ENCODE measurements at regions of chr22 and their contacts with region 1.

Region 1: GRCh38 chr22:28882878-28883656 is at the start of gene ZNRF3:
- DNase-seq: peak; percentile 76 to 91 (median 87)
- ATAC-seq: peak; percentile 98
- H3K4me3 ChIP-seq: peak within 1 kb of the TSS; percentile 90
- H3K4me3 Mint-ChIP-seq: peak within 1 kb of the TSS; percentile 66 to 94 (median 88)
- H3K27ac ChIP-seq: peak within 1 kb of the TSS; percentile 15
- H3K27ac Mint-ChIP-seq: peak within 1 kb of the TSS; percentile 33 to 78 (median 62)
- H3K4me1 ChIP-seq: peaks cover 8 to 12% of the 10 kb centered on the region in 2 donors
- H3K4me1 Mint-ChIP-seq: peaks cover 13 to 29% (median 21%) of the 10 kb centered on the region in 7 donors
- H3K27me3 ChIP-seq: peaks cover 0 to 3% of the 10 kb centered on the region in 2 donors
- H3K27me3 Mint-ChIP-seq: peaks cover 8 to 72% (median 16%) of the 10 kb centered on the region in 5 donors
- total RNA-seq, gene ZNRF3: 0.59 to 0.98 (median 0.70) TPM

Region 2: GRCh38 chr22:28674121-28674563 is 208.9 kb before region 1 on chr22:
- CTCF ChIA-PET with region 1: no interaction called
- POLR2A ChIA-PET with region 1: no interaction called
- intact Hi-C with region 1: loop called in 1 of 2 experiments (anchors 1 kb)
- DNase-seq: peak in 7 of 9 donors; percentile 57 to 75 (median 61)
- ATAC-seq: peak; percentile 91
- H3K4me3 ChIP-seq: no peak overlapping the region
- H3K4me3 Mint-ChIP-seq: peak overlapping the region in 9 of 10 donors; percentile 70 to 95 (median 78)
- H3K27ac ChIP-seq: no peak overlapping the region
- H3K27ac Mint-ChIP-seq: peak overlapping the region; percentile 88 to 100 (median 98)
- H3K4me1 ChIP-seq: peaks cover 16 to 17% of the 10 kb centered on the region in 2 donors
- H3K4me1 Mint-ChIP-seq: peaks cover 23 to 35% (median 34%) of the 10 kb centered on the region in 7 donors
- H3K27me3 ChIP-seq: peaks cover 10 to 42% of the 10 kb centered on the region in 2 donors
- H3K27me3 Mint-ChIP-seq: peaks cover 47 to 83% (median 66%) of the 10 kb centered on the region in 5 donors

Region 3: GRCh38 chr22:28772633-28773460 is 110.2 kb before region 1 on chr22 and contains the start of gene CCDC117:
- CTCF ChIA-PET with region 1: no interaction called
- POLR2A ChIA-PET with region 1: no interaction called
- intact Hi-C with region 1: loop called in 1 of 2 experiments (anchors 1 kb)
- DNase-seq: peak; percentile 76 to 93 (median 88)
- ATAC-seq: peak; percentile 97
- H3K4me3 ChIP-seq: peak within 1 kb of the TSS; percentile 83
- H3K4me3 Mint-ChIP-seq: peak within 1 kb of the TSS; percentile 84 to 100 (median 97)
- H3K27ac ChIP-seq: peak within 1 kb of the TSS; percentile 91
- H3K27ac Mint-ChIP-seq: peak within 1 kb of the TSS; percentile 86 to 98 (median 91)
- H3K4me1 ChIP-seq: peaks cover 13 to 17% of the 10 kb centered on the region in 2 donors
- H3K4me1 Mint-ChIP-seq: peaks cover 17 to 46% (median 31%) of the 10 kb centered on the region in 7 donors
- H3K27me3 ChIP-seq: no peaks in the 10 kb centered on the region
- H3K27me3 Mint-ChIP-seq: peaks cover 0 to 2% (median 0%) of the 10 kb centered on the region in 5 donors
- total RNA-seq, gene CCDC117: 13.5 to 33.5 (median 21.2) TPM

Region 4: DNA sequence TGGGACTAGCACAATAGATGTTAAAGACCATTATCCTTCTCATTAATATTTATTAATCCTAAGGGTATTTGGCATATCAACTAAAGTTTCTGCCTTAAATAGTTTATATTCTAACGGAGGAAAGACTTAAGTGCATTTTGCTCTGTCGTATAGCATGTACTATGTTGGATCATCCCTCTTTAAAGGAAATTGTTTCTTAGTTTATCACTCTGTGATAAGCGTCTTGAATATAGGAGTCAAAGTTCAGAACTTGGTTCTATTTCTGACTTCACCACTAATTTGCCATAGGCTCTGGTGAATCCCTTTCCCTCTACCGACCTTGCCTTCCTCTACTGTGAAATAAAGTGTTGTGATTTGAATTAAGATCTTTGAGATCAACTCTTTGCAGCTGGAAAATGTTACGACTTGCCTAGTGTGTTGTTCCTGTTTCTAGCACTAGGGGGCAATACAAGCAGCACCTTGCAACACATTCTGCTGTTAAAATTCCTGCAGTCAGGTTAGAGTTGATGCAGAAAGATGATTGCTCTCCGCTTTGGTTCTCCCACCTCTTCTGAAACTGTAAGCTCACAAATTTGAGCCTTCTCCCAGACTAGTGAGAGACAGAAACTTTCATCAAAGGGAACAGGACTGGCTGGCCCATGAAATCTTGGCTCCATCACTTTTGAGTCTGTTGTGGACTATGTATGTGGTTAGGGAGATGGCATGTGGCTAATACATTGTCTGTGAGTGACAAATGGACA is 27.5 kb before region 1 on chr22:
- CTCF ChIA-PET with region 1: no interaction called
- POLR2A ChIA-PET with region 1: no interaction called
- intact Hi-C with region 1: no loop called
- DNase-seq: peak in 8 of 9 donors; percentile 29 to 70 (median 58)
- ATAC-seq: peak; percentile 68
- H3K4me3 ChIP-seq: no peak overlapping the region
- H3K4me3 Mint-ChIP-seq: no peak overlapping the region
- H3K27ac ChIP-seq: no peak overlapping the region
- H3K27ac Mint-ChIP-seq: no peak overlapping the region
- H3K4me1 ChIP-seq: no peaks in the 10 kb centered on the region
- H3K4me1 Mint-ChIP-seq: no peaks in the 10 kb centered on the region
- H3K27me3 ChIP-seq: no peaks in the 10 kb centered on the region
- H3K27me3 Mint-ChIP-seq: peaks cover 3 to 18% (median 5%) of the 10 kb centered on the region in 5 donors

Region 5: GRCh38 chr22:28899199-28899853 is 16.3 kb after region 1 on chr22:
- CTCF ChIA-PET with region 1: no interaction called
- POLR2A ChIA-PET with region 1: interaction called, 5 read pairs
- intact Hi-C with region 1: loop called in 1 of 2 experiments (anchors 2 kb)
- DNase-seq: peak in 7 of 9 donors; percentile 19 to 67 (median 58)
- ATAC-seq: peak; percentile 89
- H3K4me3 ChIP-seq: no peak overlapping the region
- H3K4me3 Mint-ChIP-seq: peak overlapping the region in 8 of 10 donors; percentile 0 to 71 (median 48)
- H3K27ac ChIP-seq: no peak overlapping the region
- H3K27ac Mint-ChIP-seq: peak overlapping the region in 4 of 9 donors; percentile 2 to 86 (median 54)
- H3K4me1 ChIP-seq: peaks cover 6 to 7% of the 10 kb centered on the region in 2 donors
- H3K4me1 Mint-ChIP-seq: peaks cover 11 to 33% (median 22%) of the 10 kb centered on the region in 7 donors
- H3K27me3 ChIP-seq: no peaks in the 10 kb centered on the region
- H3K27me3 Mint-ChIP-seq: peaks cover 0 to 61% (median 5%) of the 10 kb centered on the region in 5 donors

Region 6: DNA sequence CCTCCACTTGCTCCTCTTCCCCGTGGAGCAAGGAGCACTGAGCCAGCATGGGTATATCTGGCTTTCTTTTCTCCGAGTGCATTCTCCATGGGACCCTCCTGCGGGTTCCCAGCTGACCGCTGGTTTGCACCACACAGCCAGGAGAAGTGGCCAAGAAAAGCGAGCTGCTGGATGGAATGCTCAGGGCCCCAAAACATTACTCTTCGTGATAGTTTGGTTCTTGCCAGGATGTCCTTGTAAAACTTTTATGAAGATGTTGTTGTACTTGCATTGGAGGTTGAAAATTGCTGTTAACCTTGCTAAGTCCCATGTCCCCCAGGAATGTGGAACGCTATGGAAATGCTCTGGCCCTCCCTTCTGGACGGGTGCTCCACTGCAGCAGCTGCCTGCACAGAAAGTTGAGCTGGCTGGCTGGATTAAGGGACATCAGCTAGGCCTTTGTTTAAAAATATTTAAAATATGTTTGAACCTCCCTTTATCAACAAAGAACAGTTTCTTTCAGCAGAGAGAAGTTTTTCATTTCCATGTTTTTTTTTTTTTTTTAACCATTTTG is 69.0 kb after region 1 on chr22:
- CTCF ChIA-PET with region 1: no interaction called
- POLR2A ChIA-PET with region 1: no interaction called
- intact Hi-C with region 1: loop called (anchors 2 to 10 kb)
- DNase-seq: no peak
- ATAC-seq: no peak
- H3K4me3 ChIP-seq: no peak overlapping the region
- H3K4me3 Mint-ChIP-seq: no peak overlapping the region
- H3K27ac ChIP-seq: no peak overlapping the region
- H3K27ac Mint-ChIP-seq: no peak overlapping the region
- H3K4me1 ChIP-seq: peaks cover 15 to 20% of the 10 kb centered on the region in 2 donors
- H3K4me1 Mint-ChIP-seq: peaks cover 12 to 19% (median 19%) of the 10 kb centered on the region in 7 donors
- H3K27me3 ChIP-seq: peaks cover 0 to 42% of the 10 kb centered on the region in 2 donors
- H3K27me3 Mint-ChIP-seq: peaks cover 71 to 91% (median 82%) of the 10 kb centered on the region in 5 donors

Region 7: GRCh38 chr22:29072193-29072978 is 189.3 kb after region 1 on chr22:
- CTCF ChIA-PET with region 1: no interaction called
- POLR2A ChIA-PET with region 1: no interaction called
- intact Hi-C with region 1: loop called (anchors 1 kb)
- DNase-seq: peak; percentile 72 to 87 (median 84)
- ATAC-seq: peak; percentile 98
- H3K4me3 ChIP-seq: peak overlapping the region; percentile 46
- H3K4me3 Mint-ChIP-seq: peak overlapping the region; percentile 69 to 90 (median 82)
- H3K27ac ChIP-seq: no peak overlapping the region
- H3K27ac Mint-ChIP-seq: peak overlapping the region in 1 of 9 donors; percentile 44
- H3K4me1 ChIP-seq: peaks cover 19 to 21% of the 10 kb centered on the region in 2 donors
- H3K4me1 Mint-ChIP-seq: peaks cover 15 to 26% (median 23%) of the 10 kb centered on the region in 7 donors
- H3K27me3 ChIP-seq: peaks cover 17 to 26% of the 10 kb centered on the region in 2 donors
- H3K27me3 Mint-ChIP-seq: peaks cover 40 to 69% (median 44%) of the 10 kb centered on the region in 5 donors